ENCODE measurements at regions of chr2 and their contacts with region 1.

Region 1: GRCh38 chr2:28566521-28567041 is 70.7 kb downstream of the PLB1 start:
- DNase-seq: peak; percentile 87
- ATAC-seq: peak; percentile 88
- H3K4me3 ChIP-seq: peak overlapping the region; percentile 76
- H3K27ac ChIP-seq: peak overlapping the region; percentile 64; the same call in 1 of the 2 replicates
- H3K4me1 ChIP-seq: peaks cover 25% of the 10 kb centered on the region
- H3K27me3 ChIP-seq: no peaks in the 10 kb centered on the region
- CTCF ChIP-seq: peak; percentile 98

Region 2: GRCh38 chr2:27703638-27704341 is 862.8 kb before region 1 on chr2:
- CTCF ChIA-PET with region 1: interaction called, 9 read pairs
- POLR2A ChIA-PET with region 1: no interaction called
- intact Hi-C with region 1: loop called (anchors 10 kb)
- DNase-seq: peak; percentile 94
- ATAC-seq: peak; percentile 62
- H3K4me3 ChIP-seq: no peak overlapping the region
- H3K27ac ChIP-seq: no peak overlapping the region
- H3K4me1 ChIP-seq: peaks cover 30% of the 10 kb centered on the region
- H3K27me3 ChIP-seq: no peaks in the 10 kb centered on the region
- CTCF ChIP-seq: peak; percentile 96

Region 3: GRCh38 chr2:28528206-28528605 is 38.4 kb before region 1 on chr2:
- CTCF ChIA-PET with region 1: no interaction called
- POLR2A ChIA-PET with region 1: no interaction called
- intact Hi-C with region 1: no loop called
- DNase-seq: no peak
- ATAC-seq: no peak
- H3K4me3 ChIP-seq: no peak overlapping the region
- H3K27ac ChIP-seq: no peak overlapping the region
- H3K4me1 ChIP-seq: no peaks in the 10 kb centered on the region
- H3K27me3 ChIP-seq: no peaks in the 10 kb centered on the region
- CTCF ChIP-seq: no peak

Region 4: GRCh38 chr2:28583899-28584553 is 17.4 kb after region 1 on chr2:
- CTCF ChIA-PET with region 1: interaction called, 8 read pairs
- POLR2A ChIA-PET with region 1: interaction called, 16 read pairs
- intact Hi-C with region 1: loop called (anchors 1 kb)
- DNase-seq: peak; percentile 97
- ATAC-seq: peak; percentile 94
- H3K4me3 ChIP-seq: peak overlapping the region; percentile 46
- H3K27ac ChIP-seq: peak overlapping the region; percentile 96
- H3K4me1 ChIP-seq: peaks cover 38% of the 10 kb centered on the region
- H3K27me3 ChIP-seq: no peaks in the 10 kb centered on the region
- CTCF ChIP-seq: no peak

Region 5: DNA sequence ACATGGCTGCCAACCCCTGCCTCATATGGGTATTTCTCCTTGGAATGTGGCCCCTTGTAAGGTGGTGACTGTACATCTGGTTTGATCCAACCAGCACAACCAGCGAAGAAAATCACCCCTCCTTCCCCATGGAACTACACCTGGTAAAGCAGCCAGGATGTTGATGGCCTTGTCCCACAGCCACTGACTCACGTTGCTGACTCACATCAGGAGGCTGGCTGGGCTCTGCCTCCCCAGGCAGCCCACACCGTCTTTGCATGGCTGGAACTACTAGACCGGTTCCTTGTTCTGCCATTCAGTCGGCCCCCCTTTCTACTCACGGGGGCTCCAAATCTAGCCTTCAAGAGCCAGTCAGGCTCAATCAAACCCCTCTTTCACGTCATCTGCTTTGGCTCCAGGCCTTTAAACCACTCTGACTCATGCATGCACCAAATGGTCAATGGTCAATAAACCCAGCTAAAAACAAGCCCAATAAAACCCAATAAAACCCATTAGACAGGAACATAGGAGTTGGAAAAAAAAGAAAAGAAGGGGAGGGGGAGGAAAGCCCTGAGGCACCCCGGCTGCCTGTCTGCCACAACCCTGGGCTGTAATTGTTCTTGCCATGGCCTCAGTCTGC is 44.1 kb after region 1 on chr2:
- CTCF ChIA-PET with region 1: interaction called, 4 read pairs
- POLR2A ChIA-PET with region 1: no interaction called
- intact Hi-C with region 1: loop called (anchors 1 kb)
- DNase-seq: peak; percentile 99
- ATAC-seq: peak; percentile 87
- H3K4me3 ChIP-seq: no peak overlapping the region
- H3K27ac ChIP-seq: peak overlapping the region; percentile 94
- H3K4me1 ChIP-seq: peaks cover 53% of the 10 kb centered on the region
- H3K27me3 ChIP-seq: no peaks in the 10 kb centered on the region
- CTCF ChIP-seq: no peak

Region 6: GRCh38 chr2:28661589-28662001 is 95.0 kb after region 1 on chr2:
- CTCF ChIA-PET with region 1: no interaction called
- POLR2A ChIA-PET with region 1: no interaction called
- intact Hi-C with region 1: loop called (anchors 1 kb)
- DNase-seq: peak; percentile 84
- ATAC-seq: peak; percentile 44
- H3K4me3 ChIP-seq: peak overlapping the region; percentile 23; the same call in 1 of the 2 replicates
- H3K27ac ChIP-seq: peak overlapping the region; percentile 88
- H3K4me1 ChIP-seq: peaks cover 52% of the 10 kb centered on the region
- H3K27me3 ChIP-seq: no peaks in the 10 kb centered on the region
- CTCF ChIP-seq: no peak

Region 7: DNA sequence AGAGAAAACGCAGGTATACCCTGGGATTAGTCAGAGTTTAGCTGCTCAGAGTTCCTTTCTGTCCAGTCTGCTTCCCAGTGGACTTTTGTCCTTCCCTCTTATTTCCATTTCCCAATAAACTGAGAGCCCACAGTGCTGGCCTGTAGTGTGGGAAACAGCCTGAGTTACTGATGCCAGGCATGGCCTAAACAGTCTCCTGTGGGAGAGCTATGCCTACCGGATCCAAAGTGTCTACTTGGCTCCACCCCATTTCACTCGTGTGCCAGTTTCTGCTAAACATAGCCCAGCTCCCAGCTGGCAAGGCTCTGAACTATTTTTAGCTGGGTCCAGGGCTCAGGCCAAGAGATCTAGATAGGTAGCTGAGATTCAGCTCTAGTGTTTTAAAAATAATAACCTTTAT is 169.5 kb after region 1 on chr2:
- CTCF ChIA-PET with region 1: no interaction called
- POLR2A ChIA-PET with region 1: no interaction called
- intact Hi-C with region 1: no loop called
- DNase-seq: peak; percentile 50
- ATAC-seq: peak; percentile 78
- H3K4me3 ChIP-seq: no peak overlapping the region
- H3K27ac ChIP-seq: no peak overlapping the region
- H3K4me1 ChIP-seq: peaks cover 7% of the 10 kb centered on the region; the same call in 1 of the 2 replicates
- H3K27me3 ChIP-seq: no peaks in the 10 kb centered on the region
- CTCF ChIP-seq: no peak

Region 8: GRCh38 chr2:28801726-28802487 is 235.3 kb after region 1 on chr2:
- CTCF ChIA-PET with region 1: no interaction called
- POLR2A ChIA-PET with region 1: no interaction called
- intact Hi-C with region 1: loop called (anchors 5 kb)
- DNase-seq: peak; percentile 56
- ATAC-seq: peak; percentile 59
- H3K4me3 ChIP-seq: no peak overlapping the region
- H3K27ac ChIP-seq: no peak overlapping the region
- H3K4me1 ChIP-seq: peaks cover 25% of the 10 kb centered on the region
- H3K27me3 ChIP-seq: no peaks in the 10 kb centered on the region
- CTCF ChIP-seq: no peak

Region 9: GRCh38 chr2:29146197-29146596 is 579.6 kb after region 1 on chr2:
- CTCF ChIA-PET with region 1: no interaction called
- POLR2A ChIA-PET with region 1: no interaction called
- intact Hi-C with region 1: no loop called
- DNase-seq: peak; percentile 78
- ATAC-seq: peak; percentile 85
- H3K4me3 ChIP-seq: peak overlapping the region; percentile 20
- H3K27ac ChIP-seq: peak overlapping the region; percentile 50
- H3K4me1 ChIP-seq: peaks cover 15% of the 10 kb centered on the region
- H3K27me3 ChIP-seq: no peaks in the 10 kb centered on the region
- CTCF ChIP-seq: no peak